ENCODE measurements at regions of chr21 and their contacts with region 1.

Region 1: DNA sequence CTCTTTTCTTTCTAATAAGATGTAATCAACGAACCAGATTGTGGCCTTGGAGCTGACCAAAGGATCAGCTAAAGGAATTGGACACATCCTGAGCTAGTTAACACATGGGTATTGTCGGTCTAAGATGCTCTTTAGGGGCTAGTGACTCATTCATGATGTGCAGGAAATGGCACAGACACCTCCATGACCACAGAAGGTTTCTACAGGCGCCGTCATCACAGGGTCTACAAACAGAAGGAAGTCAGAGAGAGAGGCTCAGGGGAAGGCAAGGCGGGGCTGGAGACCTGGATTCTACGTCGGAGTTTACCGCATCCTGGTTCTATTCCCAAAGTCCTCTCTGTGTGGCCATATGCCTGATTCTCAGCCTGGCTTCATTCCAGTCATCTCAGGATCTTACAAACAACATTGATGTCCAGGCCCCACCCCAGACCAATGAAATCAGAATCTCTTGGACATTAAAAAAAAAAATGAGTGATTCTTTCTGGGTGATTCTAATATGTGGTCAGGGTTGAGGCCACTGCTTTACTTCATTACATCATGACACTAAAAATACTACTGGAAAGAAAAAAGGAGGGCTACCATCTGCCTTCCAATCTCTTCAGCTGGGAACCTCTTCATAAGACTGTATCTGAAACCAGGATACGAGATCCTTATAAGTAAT is 11.8 kb upstream of the KCNJ15 start:
- DNase-seq: peak; percentile 53
- H3K4me3 Mint-ChIP-seq: peak overlapping the region; percentile 30
- H3K27ac Mint-ChIP-seq: peak overlapping the region; percentile 74
- H3K4me1 Mint-ChIP-seq: peaks cover 39% of the 10 kb centered on the region
- H3K27me3 Mint-ChIP-seq: peaks cover 5% of the 10 kb centered on the region

Region 2: GRCh38 chr21:38205940-38206339 is 39.1 kb before region 1 on chr21:
- intact Hi-C with region 1: no loop called
- DNase-seq: no peak
- H3K4me3 Mint-ChIP-seq: no peak overlapping the region
- H3K27ac Mint-ChIP-seq: no peak overlapping the region
- H3K4me1 Mint-ChIP-seq: no peaks in the 10 kb centered on the region
- H3K27me3 Mint-ChIP-seq: peaks cover 11% of the 10 kb centered on the region

Region 3: GRCh38 chr21:38219049-38219628 is 25.9 kb before region 1 on chr21:
- intact Hi-C with region 1: loop called (anchors 1 kb)
- DNase-seq: peak; percentile 31
- H3K4me3 Mint-ChIP-seq: no peak overlapping the region
- H3K27ac Mint-ChIP-seq: peak overlapping the region; percentile 45
- H3K4me1 Mint-ChIP-seq: peaks cover 8% of the 10 kb centered on the region
- H3K27me3 Mint-ChIP-seq: peaks cover 2% of the 10 kb centered on the region

Region 4: DNA sequence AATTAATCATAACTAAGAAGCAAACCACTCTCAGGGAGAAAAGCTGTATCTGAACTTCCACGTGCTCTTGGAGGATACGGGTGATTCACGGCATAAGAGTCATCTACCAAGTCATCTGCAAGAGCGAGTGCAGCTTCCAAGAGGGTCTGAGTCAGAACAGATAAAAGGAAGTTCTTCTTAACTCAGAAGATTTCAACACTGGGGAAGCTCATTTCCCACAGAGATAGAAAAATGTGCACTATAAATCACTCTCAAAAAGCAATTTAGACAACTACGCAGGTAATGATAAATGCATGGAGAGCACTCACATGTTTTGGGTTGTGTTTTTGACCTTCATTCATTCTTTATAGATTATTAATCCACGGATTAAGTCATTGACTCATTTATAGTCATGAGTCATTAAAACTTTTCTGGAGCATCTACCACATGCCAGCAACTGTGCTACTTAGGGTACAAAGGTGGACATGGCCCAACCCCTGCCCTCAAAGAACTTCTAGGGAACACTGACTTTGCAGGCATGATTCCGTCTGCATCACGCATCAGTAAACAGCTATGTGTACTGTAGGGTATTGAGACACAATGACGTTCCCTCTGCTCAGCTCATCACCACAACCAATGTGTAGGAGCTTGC is 32.6 kb after region 1 on chr21:
- intact Hi-C with region 1: loop called (anchors 2 kb)
- DNase-seq: no peak
- H3K4me3 Mint-ChIP-seq: no peak overlapping the region
- H3K27ac Mint-ChIP-seq: no peak overlapping the region
- H3K4me1 Mint-ChIP-seq: peaks cover 9% of the 10 kb centered on the region
- H3K27me3 Mint-ChIP-seq: peaks cover 4% of the 10 kb centered on the region

Region 5: DNA sequence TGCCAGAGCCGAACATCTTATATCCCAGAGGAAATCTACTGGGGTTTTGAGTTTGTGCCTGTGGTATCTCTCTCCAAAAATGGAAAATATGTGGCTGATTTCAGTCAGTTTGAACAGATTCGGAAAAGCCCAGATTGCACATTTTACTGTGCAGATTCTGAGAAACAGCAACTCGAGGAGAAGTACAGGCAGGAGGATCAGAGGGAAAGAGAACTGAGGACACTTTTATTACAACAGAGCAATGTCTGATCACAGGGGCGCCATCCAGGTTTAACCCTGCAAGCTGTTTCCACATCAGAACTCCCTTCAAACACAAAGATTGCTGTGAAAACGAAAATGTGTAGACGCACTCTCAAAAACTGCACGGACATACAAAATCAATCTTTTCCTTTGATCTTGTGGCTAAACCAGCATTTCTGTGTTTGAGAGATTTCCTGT is 55.1 kb after region 1 on chr21:
- intact Hi-C with region 1: loop called (anchors 2 kb)
- DNase-seq: no peak
- H3K4me3 Mint-ChIP-seq: peak overlapping the region; percentile 23
- H3K27ac Mint-ChIP-seq: no peak overlapping the region
- H3K4me1 Mint-ChIP-seq: peaks cover 28% of the 10 kb centered on the region
- H3K27me3 Mint-ChIP-seq: no peaks in the 10 kb centered on the region

Region 6: GRCh38 chr21:38323721-38324531 is 78.9 kb after region 1 on chr21:
- intact Hi-C with region 1: loop called (anchors 2 kb)
- DNase-seq: no peak
- H3K4me3 Mint-ChIP-seq: no peak overlapping the region
- H3K27ac Mint-ChIP-seq: no peak overlapping the region
- H3K4me1 Mint-ChIP-seq: peaks cover 21% of the 10 kb centered on the region
- H3K27me3 Mint-ChIP-seq: no peaks in the 10 kb centered on the region

Region 7: GRCh38 chr21:38349111-38349746 is 104.2 kb after region 1 on chr21:
- intact Hi-C with region 1: loop called (anchors 1 kb)
- DNase-seq: no peak
- H3K4me3 Mint-ChIP-seq: no peak overlapping the region
- H3K27ac Mint-ChIP-seq: peak overlapping the region; percentile 91
- H3K4me1 Mint-ChIP-seq: peaks cover 37% of the 10 kb centered on the region
- H3K27me3 Mint-ChIP-seq: peaks cover 3% of the 10 kb centered on the region

Measured in activated T-helper 1 cell treated with anti-CD3 and anti-CD28 coated beads, Interleukin-12 subunit alpha, Interleukin-12 subunit beta, Interleukin-2, Interleukin-4 antibody, amounts not matched to agents 30 ng/mL and 10 ng/mL and 1 ng/mL, durations not matched to agents 14 hours and 24 hours and 36 hours (primary cell).